ENCODE measurements at regions of chr14 and their contacts with region 1.

Region 1: GRCh38 chr14:70665191-70665916 is 23.6 kb downstream of the TTC9 start:
- DNase-seq: peak; percentile 82
- H3K4me3 ChIP-seq: peak overlapping the region; percentile 47
- H3K27ac ChIP-seq: peak overlapping the region; percentile 93
- H3K4me1 ChIP-seq: peaks cover 100% of the 10 kb centered on the region
- CTCF ChIP-seq: no peak

Region 2: DNA sequence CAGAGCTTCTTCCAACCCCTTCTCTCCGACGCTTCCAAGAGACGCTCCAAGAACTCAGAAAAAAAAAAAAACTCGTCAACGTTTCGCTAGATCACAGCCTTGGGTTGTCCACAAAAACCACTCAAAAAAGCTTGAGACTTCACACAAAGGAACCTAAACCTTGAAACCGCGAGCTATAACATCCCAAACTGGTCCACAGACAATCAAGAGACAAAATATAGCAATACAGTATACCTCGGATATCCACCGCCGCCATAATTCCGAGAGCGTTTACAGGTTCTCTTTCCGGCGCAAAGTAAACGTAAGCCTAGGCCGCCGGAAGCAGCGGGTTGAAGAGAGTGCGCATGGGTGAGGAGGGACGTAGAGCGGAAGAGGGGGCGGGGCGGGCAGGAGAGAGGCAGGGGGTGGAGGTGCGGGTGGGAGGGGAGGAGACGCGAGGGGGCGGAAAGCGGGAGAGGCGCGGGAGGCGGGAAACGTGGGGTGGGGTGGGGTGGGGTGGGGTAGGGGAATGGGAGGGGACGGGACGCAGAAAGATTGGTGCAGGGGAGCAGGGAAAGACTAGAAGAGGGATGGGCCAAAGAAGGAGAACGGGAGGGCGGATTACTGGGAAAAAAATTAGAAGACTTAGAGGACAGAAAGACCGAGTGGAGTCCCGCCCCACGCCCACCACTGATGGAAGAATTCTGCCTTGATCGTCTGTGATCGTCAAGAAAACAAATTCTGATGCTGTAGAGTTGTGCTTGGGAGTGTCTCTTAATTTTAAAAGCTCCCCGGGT is 64.8 kb before region 1 on chr14 and contains the start of gene MED6:
- CTCF ChIA-PET with region 1: no interaction called
- POLR2A ChIA-PET with region 1: no interaction called
- intact Hi-C with region 1: loop called (anchors 2 kb)
- DNase-seq: peak; percentile 94
- H3K4me3 ChIP-seq: peak within 1 kb of the TSS; percentile 97
- H3K27ac ChIP-seq: peak within 1 kb of the TSS; percentile 34
- H3K4me1 ChIP-seq: peaks cover 34% of the 10 kb centered on the region
- CTCF ChIP-seq: no peak
- total RNA-seq, gene MED6: 28.4 and 28.8 TPM in 2 replicates

Region 3: DNA sequence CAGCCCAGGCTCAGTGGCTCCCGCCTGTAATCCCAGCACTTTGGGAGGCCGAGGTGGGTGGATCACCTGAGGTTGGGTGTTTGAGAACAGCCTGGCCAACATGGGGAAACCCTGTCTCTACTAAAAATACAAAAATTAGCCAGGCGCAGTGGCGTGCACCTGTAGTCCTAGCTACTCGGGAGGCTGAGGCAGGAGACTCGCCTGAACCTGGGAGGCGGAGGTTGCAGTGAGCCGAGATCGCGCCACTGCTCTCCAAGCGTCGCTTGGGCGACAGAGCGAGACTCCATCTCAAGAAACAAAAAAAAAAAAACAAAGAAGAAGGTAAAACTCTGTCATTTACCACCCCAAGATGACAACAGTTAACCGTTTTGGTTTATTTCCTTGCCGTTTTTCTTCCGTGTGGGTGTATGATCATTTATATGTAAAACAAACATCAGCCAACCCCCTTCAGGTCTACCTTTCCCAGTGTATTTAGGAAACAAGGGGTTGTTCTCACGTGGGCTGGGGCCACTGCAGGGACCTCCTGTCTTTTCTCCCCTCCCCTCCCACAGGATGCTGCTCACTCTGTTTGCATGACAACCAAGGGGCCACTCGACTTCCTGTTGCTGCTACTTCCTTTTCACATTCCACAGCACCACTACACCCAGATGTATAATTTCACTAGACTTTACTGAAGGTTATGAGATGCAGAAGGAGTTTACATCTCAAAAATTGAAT is 10.1 kb before region 1 on chr14:
- CTCF ChIA-PET with region 1: interaction called, 6 read pairs
- POLR2A ChIA-PET with region 1: interaction called, 100 read pairs
- intact Hi-C with region 1: loop called (anchors 1 kb)
- DNase-seq: peak; percentile 95
- H3K4me3 ChIP-seq: peak overlapping the region; percentile 64
- H3K27ac ChIP-seq: peak overlapping the region; percentile 99
- H3K4me1 ChIP-seq: peaks cover 87% of the 10 kb centered on the region
- CTCF ChIP-seq: no peak

Region 4: DNA sequence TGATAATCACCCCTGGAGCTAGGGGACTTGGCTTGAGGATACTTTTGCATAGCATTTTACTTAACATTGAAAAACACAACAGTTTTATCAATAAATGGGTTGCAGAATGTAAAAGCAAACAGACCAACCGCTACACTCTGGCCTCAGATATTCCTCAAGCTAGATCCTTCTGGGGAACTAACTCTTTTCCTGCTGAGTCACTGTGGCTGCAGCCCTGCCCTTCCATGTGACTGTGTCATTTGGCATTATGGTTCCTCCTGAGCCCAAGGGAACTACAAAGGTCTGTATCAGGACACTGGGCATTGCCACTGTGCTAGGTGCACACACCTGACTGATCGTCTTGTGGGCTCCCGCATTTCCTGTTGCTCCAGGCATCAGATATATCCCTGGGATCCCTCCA is 32.9 kb after region 1 on chr14:
- CTCF ChIA-PET with region 1: interaction called, 10 read pairs
- POLR2A ChIA-PET with region 1: interaction called, 10 read pairs
- intact Hi-C with region 1: no loop called
- DNase-seq: no peak
- H3K4me3 ChIP-seq: no peak overlapping the region
- H3K27ac ChIP-seq: no peak overlapping the region
- H3K4me1 ChIP-seq: no peaks in the 10 kb centered on the region
- CTCF ChIP-seq: no peak

Region 5: DNA sequence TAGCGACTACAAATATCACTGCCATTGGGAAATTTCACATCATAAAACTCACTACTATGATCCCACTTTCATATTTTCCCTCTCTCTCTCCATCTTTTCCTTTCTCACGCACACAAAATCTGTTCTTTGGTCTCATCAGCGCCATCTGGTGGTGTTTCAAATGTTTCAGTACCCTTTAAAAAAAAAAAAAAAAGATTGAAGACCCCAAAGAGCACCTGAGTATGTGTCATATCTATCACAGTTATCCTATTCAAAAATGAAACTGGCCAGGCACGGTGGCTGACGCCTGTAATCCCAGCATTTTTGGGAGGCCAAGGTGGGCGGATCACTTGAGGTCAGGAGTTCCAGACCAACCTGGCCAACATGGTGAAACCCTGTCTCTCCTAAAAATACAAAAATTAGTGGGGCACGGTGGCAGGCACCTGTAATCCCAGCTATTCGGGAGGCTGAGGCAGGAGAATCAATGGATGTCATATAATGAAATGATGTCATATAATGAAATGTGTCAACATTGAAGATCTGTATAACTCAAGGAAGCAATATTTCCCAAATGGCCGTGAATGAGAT is 48.8 kb after region 1 on chr14:
- CTCF ChIA-PET with region 1: interaction called, 3 read pairs
- POLR2A ChIA-PET with region 1: interaction called, 8 read pairs
- intact Hi-C with region 1: loop called (anchors 5 kb)
- DNase-seq: peak; percentile 79
- H3K4me3 ChIP-seq: no peak overlapping the region
- H3K27ac ChIP-seq: no peak overlapping the region
- H3K4me1 ChIP-seq: peaks cover 14% of the 10 kb centered on the region
- CTCF ChIP-seq: peak; percentile 90

Measured in OCI-LY7 (cell line).